GM12878 (cell line): ENCODE measurements at regions of chr15 and their contacts with region 1.

Region 1: DNA sequence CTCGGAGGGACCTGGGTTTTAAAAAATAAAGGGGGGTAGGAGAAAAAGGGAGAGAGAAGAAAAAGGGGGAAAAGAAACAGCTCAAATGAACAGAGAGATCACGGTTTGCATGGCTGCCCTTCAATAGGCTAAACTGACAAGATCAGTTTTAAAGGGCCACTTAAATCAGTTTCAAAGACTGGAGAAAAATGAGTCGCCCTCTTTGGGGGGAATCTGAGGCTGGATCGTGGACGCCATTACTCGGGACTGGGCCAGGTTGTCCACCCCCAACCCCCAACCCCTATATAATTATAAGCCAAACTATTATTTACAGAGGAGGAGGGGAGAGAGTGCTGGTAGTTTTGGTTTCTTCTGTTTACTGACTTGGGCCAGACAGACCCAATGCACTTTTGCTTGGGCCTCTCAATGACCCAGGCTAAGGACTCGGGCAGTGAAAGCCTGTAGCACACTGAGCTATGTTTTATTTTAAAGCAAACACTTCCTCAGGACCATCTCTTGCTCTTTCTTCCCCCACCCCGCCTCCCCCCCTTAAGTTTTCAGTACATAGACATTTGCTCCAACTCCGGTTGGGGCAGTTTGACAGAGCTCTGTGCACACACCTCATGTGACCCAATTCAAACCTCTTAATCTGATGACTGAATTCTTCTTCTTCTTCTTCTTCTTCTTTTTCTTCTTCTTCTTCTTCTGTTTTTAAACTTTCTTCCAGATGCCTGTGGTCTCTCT is 6.3 kb downstream of the NR2F2 start:
- DNase-seq: no peak
- ATAC-seq: peak; percentile 17
- H3K4me3 ChIP-seq: peak overlapping the region; percentile 11; the same call in 1 of the 2 replicates
- H3K27ac ChIP-seq: peak overlapping the region; percentile 44; the same call in 1 of the 2 replicates
- H3K4me1 ChIP-seq: no peaks in the 10 kb centered on the region
- H3K27me3 ChIP-seq: no peaks in the 10 kb centered on the region
- CTCF ChIP-seq: no peak
- EP300 ChIP-seq: no peak
- POLR2A ChIP-seq: no peak
- RAD21 ChIP-seq: no peak

Region 2: GRCh38 chr15:96321639-96322535 is 14.9 kb before region 1 on chr15:
- CTCF ChIA-PET with region 1: interaction called, 212 read pairs
- POLR2A ChIA-PET with region 1: interaction called, 163 read pairs
- RAD21 ChIA-PET with region 1: interaction called, 252 read pairs
- SMC1A ChIA-PET with region 1: interaction called, 103 read pairs
- in situ Hi-C with region 1: no loop called
- intact Hi-C with region 1: no loop called
- DNase-seq: no peak
- ATAC-seq: peak; percentile 31
- H3K4me3 ChIP-seq: peak overlapping the region; percentile 47
- H3K27ac ChIP-seq: no peak overlapping the region
- H3K4me1 ChIP-seq: peaks cover 3% of the 10 kb centered on the region; the same call in 1 of the 2 replicates
- H3K27me3 ChIP-seq: peaks cover 0 to 18% of the 10 kb centered on the region in 2 experiments; a peak in 2 of 4 replicates
- CTCF ChIP-seq: peak in 1 of 3 experiments; percentile 17; a peak in 1 of 6 replicates
- EP300 ChIP-seq: no peak
- POLR2A ChIP-seq: no peak
- RAD21 ChIP-seq: no peak